Activated CD8-positive, alpha-beta T cell treated with anti-CD3 and anti-CD28 coated beads, Interleukin-2, amount 10 ng/mL, durations not matched to agents 7 days and 5 days (primary cell): ENCODE measurements at regions of chr15 and their contacts with region 1.

Region 1: GRCh38 chr15:59492389-59493377 is 54.7 kb downstream of the FAM81A start:
- DNase-seq: peak; percentile 68
- ATAC-seq: peak; percentile 87
- H3K4me3 Mint-ChIP-seq: no peak overlapping the region
- H3K27ac Mint-ChIP-seq: no peak overlapping the region
- H3K4me1 Mint-ChIP-seq: peaks cover 4% of the 10 kb centered on the region
- H3K27me3 Mint-ChIP-seq: peaks cover 23% of the 10 kb centered on the region

Region 2: DNA sequence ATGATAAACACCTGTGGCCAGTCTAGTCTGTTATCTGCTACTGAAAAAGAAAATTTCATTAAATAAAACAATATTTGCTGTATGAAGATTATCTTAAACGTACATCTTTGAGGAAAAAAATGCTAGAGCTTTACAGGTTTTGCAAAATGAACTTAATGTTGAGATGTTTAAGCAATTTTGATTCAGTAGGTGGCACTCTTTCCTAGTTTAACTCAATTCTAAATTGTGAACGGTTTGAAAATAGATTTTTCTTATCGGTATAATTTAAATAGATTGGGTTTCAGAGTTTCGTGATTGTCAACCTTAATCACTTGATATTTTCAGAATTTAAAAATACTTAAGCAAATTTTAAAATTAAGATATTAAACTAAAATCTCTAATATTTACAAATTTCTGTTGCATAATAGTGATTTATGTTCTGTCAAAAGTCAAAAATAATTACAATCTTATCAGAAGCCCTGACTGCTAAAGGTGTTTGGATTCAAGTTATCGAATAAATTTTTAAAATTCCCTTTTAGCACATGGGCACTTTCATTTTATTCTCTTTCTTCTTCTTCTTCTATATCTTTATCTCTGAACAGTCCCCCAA is 512.2 kb before region 1 on chr15:
- CTCF ChIA-PET with region 1: interaction called, 26 read pairs
- POLR2A ChIA-PET with region 1: no interaction called
- DNase-seq: no peak
- ATAC-seq: no peak
- H3K4me3 Mint-ChIP-seq: no peak overlapping the region
- H3K27ac Mint-ChIP-seq: no peak overlapping the region
- H3K4me1 Mint-ChIP-seq: peaks cover 54% of the 10 kb centered on the region
- H3K27me3 Mint-ChIP-seq: peaks cover 4% of the 10 kb centered on the region

Region 3: DNA sequence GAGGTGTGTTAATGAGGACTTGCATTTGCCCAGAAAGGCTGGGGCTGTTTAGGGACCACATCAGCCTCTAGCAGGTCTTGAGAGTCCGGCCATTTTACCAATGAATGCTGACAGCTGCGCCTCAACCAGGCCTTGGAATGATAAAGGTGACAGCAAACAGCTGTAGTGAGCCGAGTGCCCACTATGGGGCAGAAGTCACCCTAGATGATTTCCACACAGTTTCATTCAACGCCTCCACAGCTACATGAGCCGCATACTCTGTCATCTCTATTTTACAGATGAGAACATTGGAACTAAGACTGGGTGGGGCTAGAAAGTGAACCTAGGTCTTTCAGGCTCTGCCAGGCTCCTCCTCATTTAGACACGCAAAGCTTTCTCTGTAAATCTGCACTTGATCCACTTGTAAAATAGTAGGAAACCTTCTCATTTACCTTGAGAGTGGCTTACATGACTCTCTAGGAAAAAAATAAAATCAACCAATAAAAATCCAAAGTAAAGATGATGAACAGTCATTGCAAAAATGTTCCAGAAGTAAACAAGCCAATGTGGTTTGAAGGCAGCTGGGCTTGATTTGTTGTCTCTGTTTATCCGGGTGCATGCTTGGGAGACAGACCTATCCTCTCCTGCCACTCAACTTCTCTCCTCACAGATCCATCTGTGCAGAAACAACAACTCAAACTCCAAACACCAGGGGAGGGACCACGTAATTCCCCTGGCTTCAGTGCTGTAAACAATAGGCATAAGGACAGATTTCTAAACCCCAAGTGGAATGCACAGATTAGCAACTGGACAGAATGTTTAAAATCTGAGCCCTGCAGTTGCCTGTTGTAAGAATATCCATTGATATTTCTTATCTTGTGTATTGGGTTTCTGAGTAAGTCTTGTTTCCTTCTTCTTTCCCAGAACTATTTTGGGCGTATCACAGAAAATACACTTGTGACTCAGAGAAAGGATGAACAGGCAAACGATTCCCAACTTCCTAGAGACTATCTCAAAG is 317.6 kb before region 1 on chr15:
- CTCF ChIA-PET with region 1: interaction called, 23 read pairs
- POLR2A ChIA-PET with region 1: no interaction called
- DNase-seq: peak; percentile 43
- ATAC-seq: no peak
- H3K4me3 Mint-ChIP-seq: no peak overlapping the region
- H3K27ac Mint-ChIP-seq: no peak overlapping the region
- H3K4me1 Mint-ChIP-seq: peaks cover 11% of the 10 kb centered on the region
- H3K27me3 Mint-ChIP-seq: peaks cover 2% of the 10 kb centered on the region

Region 4: DNA sequence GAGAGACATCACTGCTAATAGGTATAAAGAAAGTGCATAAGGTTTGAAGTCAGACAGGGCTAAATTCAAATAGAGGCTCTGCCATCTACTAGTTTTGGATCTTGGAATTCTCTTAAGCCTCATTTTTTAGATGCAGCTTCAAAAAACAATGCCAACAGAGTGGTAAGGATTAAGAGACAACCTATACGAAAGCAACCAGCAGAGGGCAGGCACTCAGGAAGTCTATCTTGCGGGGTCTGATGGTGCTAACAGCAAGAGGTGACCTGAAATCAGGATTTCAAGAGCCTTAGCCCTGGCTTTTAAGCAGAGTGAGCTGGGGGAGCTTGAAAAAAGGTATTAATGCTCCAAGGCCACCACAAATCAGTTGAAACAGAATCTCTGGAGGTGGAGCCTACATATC is 245.3 kb before region 1 on chr15:
- CTCF ChIA-PET with region 1: interaction called, 42 read pairs
- POLR2A ChIA-PET with region 1: no interaction called
- DNase-seq: peak; percentile 83
- ATAC-seq: peak; percentile 90
- H3K4me3 Mint-ChIP-seq: no peak overlapping the region
- H3K27ac Mint-ChIP-seq: peak overlapping the region; percentile 55
- H3K4me1 Mint-ChIP-seq: peaks cover 35% of the 10 kb centered on the region
- H3K27me3 Mint-ChIP-seq: peaks cover 1% of the 10 kb centered on the region

Region 5: GRCh38 chr15:59376733-59377132 is 116.0 kb before region 1 on chr15:
- CTCF ChIA-PET with region 1: interaction called, 14 read pairs
- POLR2A ChIA-PET with region 1: no interaction called
- DNase-seq: no peak
- ATAC-seq: no peak
- H3K4me3 Mint-ChIP-seq: no peak overlapping the region
- H3K27ac Mint-ChIP-seq: no peak overlapping the region
- H3K4me1 Mint-ChIP-seq: peaks cover 18% of the 10 kb centered on the region
- H3K27me3 Mint-ChIP-seq: peaks cover 26% of the 10 kb centered on the region